GM10248 (cell line): ENCODE measurements at regions of chr20 and their contacts with region 1.

Region 1: DNA sequence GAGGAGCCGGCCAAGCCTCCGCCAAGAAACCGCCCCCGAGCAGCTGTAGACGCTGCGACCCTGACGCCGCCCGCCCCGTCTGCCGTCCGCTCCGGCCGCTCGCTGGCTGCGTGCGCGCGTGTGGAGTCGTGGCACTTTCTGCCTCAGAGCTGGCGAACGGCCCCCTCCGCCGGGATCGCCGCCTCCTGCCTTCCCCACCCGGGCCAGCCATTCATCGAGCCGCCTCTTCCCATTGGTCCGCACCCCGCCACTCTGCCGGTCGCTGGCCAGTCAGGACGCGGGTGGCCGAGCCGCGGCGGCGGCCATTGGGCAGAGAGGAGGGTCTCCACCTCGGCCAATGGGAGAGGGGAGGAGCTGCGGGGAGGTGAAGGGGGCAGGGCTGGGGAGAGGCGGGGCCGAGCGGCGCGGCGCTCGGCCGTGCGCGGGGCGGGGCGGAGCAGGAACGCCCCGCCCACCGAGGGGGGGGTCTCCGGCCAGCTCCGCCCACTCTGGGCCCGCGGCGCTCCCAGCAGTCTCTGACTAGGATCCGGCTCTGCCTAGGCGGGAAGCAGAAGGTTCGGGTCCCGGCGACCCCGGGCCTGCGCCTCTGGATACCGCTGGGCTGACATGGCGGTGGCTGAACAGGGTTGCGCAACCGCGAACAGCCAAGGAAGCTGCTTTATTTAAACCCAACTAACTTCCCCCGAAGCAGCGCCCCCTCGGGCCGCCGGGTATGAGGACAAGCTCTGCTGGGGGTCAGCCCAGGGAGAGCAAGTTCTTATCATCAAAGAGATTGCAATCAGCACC is at the start of gene RRBP1:
- DNase-seq: peak; percentile 99
- CTCF ChIP-seq: peak; percentile 65

Region 2: DNA sequence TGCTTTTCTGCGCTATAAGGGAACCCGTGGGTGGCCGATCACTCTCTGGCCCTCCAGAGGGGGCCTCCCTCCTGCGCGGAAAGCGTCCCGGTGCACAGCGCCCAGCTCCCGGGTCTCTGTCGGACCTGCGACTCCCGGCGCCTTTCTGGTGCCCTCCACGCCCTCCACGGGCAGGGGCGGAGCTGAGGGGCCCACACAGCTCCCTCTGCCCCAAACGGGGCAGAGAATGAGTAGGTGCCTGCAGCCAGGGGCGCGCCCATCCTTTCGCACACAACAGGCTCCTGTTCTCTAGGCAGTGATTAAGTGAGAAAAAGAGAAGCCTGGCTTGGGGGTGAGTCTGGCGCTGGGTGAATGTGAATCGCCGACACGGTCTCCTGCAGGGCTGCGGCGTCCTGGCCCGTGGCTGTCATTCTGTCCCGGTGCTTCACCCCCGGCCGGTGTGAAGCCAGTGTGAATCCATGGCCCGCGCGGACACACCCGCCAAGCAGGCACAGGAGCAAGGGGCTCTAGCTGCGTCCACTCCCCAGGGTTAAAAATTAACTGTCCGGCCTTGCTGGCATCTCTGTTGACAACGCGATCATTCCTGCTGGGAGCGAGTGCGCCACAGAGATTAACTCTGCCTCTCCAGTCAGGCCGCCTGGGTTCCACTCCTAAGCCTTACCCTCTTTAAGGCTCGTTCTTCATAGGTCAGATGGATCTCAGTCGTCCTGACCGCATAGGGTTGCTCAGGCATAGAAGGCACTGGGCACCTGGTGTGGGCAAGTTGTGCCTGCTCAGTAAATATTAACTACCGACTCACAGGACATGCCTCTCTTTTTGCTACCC is 366.7 kb before region 1 on chr20:
- CTCF ChIA-PET with region 1: no interaction called
- POLR2A ChIA-PET with region 1: no interaction called
- DNase-seq: no peak
- CTCF ChIP-seq: no peak

Region 3: DNA sequence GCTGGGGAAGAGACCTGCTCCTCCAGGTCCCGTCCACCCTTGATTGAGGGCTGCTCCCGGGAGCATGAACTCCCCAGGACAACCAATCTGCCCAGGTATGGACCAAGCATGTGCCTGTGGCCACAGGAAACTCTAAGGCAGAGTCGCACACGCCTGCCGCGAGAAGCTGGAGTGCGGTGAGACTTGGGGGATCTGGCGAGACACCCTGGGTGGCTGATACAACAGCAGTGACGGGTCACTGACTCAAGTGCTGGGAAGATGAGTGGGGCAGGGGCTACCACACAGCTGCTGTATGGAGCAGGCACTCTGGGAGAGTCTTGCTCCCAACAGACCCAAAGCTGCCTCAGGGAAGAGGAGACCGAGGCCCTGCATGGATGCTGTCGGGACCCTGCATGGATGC is 191.3 kb before region 1 on chr20:
- CTCF ChIA-PET with region 1: no interaction called
- POLR2A ChIA-PET with region 1: no interaction called
- DNase-seq: no peak
- CTCF ChIP-seq: no peak

Region 4: GRCh38 chr20:17654649-17655285 is 27.5 kb before region 1 on chr20:
- CTCF ChIA-PET with region 1: interaction called, 16 read pairs
- POLR2A ChIA-PET with region 1: no interaction called
- DNase-seq: no peak
- CTCF ChIP-seq: peak; percentile 32

Region 5: GRCh38 chr20:17693444-17694001 is 11.2 kb after region 1 on chr20:
- CTCF ChIA-PET with region 1: interaction called, 38 read pairs
- POLR2A ChIA-PET with region 1: no interaction called
- DNase-seq: no peak
- CTCF ChIP-seq: no peak

Region 6: DNA sequence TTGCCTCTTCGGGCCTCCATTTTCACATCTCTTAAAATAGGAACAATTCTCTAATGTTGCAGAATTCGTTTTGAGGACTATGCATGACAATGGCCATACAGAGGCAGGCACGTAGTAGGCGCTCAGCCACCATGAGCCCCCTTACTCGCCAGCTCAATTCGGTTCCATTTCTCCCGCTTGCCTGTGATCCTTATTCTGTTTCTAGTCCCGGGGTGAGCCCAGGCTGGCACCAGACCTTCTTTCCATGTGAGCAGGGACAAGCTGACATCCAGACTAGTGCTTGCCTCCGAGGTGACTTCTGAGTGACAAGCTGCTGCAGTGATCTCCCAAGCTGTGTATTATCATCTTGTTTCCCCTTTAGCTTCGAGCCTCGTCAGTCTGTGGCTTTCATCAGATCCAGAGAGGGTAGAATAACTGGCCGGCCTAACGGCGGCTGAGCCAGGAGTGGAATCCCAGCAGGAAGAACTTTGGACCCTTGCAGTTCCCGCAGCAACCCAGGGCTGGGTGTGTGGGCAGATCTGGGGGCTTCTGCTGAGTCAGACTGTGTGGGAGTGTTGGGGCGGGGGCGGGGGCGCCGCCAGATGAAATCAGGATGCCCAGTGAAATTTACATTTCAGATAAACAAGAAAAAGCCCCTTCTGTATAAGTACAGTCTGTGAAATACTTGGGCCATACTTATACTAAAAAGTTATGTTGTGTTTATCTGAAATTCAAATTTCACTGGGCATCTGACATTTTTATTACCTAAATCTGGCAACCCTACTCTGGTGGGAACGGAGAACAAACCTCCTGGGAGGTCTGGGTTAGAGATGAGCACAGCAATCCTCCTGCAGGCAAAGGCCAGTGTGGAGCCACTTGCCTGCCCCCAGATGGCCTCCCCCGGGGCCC is 28.3 kb after region 1 on chr20:
- CTCF ChIA-PET with region 1: interaction called, 10 read pairs
- POLR2A ChIA-PET with region 1: interaction called, 3 read pairs
- DNase-seq: no peak
- CTCF ChIP-seq: no peak

Region 7: GRCh38 chr20:17898548-17898994 is 216.3 kb after region 1 on chr20:
- CTCF ChIA-PET with region 1: interaction called, 31 read pairs
- POLR2A ChIA-PET with region 1: interaction called, 4 read pairs
- DNase-seq: peak; percentile 65
- CTCF ChIP-seq: peak; percentile 85

Region 8: GRCh38 chr20:17968366-17969279 is 286.3 kb after region 1 on chr20 and contains the starts of genes MGME1 and SNX5:
- CTCF ChIA-PET with region 1: interaction called, 7 read pairs
- POLR2A ChIA-PET with region 1: interaction called, 12 read pairs
- DNase-seq: peak; percentile 98
- CTCF ChIP-seq: no peak